ENCODE measurements at regions of chr2 and their contacts with region 1.

Region 1: DNA sequence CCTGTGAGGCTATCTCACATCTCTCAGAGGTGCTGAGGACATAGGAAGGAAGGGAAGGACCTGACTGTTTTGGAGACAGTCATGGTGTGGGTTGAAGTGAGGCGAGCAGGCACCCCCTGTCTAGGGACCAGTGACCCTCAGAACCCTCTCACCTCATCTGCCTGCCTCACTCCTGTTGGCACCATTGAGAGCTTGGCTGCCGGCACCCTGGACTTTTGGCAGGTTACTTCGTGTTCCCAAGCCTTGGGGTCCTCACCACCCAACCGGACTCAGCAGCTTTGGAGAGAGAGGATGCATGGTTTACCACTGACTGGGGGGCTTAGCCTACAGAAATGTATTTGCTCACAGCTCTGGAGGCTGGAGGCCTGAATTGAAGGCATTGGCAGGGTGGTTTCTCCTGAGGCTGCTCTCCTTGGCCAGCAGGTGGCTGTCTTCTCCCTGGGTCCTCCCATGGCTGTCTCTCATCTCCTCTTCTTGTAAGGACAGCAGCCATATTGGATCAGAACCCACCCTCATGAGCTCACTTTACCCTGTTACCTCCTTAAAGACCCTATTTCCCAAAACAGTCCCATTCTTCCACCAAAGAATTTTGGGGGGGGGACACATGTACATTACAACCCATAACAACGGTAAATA is 142.0 kb downstream of the TSN start:
- DNase-seq: peak; percentile 53 to 60
- H3K4me3 ChIP-seq: no peak overlapping the region
- H3K4me3 Mint-ChIP-seq: no peak overlapping the region
- H3K27ac Mint-ChIP-seq: no peak overlapping the region
- H3K4me1 ChIP-seq: no peaks in the 10 kb centered on the region
- H3K4me1 Mint-ChIP-seq: no peaks in the 10 kb centered on the region
- H3K27me3 ChIP-seq: no peaks in the 10 kb centered on the region
- H3K27me3 Mint-ChIP-seq: no peaks in the 10 kb centered on the region
- CTCF ChIP-seq: peak; percentile 39 to 61

Region 2: GRCh38 chr2:121810959-121811853 is 86.2 kb before region 1 on chr2:
- CTCF ChIA-PET with region 1: interaction called, 6 read pairs
- POLR2A ChIA-PET with region 1: no interaction called
- intact Hi-C with region 1: loop called (anchors 5 kb)
- DNase-seq: peak; percentile 66 to 70
- H3K4me3 ChIP-seq: no peak overlapping the region
- H3K4me3 Mint-ChIP-seq: no peak overlapping the region
- H3K27ac Mint-ChIP-seq: no peak overlapping the region
- H3K4me1 ChIP-seq: no peaks in the 10 kb centered on the region
- H3K4me1 Mint-ChIP-seq: peaks cover 9% of the 10 kb centered on the region
- H3K27me3 ChIP-seq: no peaks in the 10 kb centered on the region
- H3K27me3 Mint-ChIP-seq: no peaks in the 10 kb centered on the region
- CTCF ChIP-seq: peak; percentile 60 to 65

Region 3: DNA sequence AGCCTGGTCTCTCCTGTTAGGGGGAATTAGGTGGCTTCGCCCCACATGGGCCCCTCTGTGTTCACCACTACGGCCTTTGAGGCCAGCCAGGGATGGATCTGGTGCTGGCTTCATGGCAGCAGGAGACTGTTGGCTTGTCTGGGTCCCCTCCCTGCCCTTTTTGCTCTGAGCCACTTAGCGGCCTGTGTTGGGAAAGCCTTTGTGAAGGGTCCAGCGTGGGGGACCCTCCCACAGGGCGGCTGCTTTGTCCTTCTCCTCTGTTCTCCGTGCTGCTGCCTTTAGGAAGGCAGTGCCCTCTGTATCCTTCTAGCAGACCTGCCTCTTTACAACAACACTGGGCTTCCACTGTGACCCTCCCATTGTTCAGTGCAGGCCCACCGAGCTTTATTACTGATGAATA is 23.6 kb before region 1 on chr2:
- CTCF ChIA-PET with region 1: no interaction called
- POLR2A ChIA-PET with region 1: no interaction called
- intact Hi-C with region 1: no loop called
- DNase-seq: no peak
- H3K4me3 ChIP-seq: no peak overlapping the region
- H3K4me3 Mint-ChIP-seq: no peak overlapping the region
- H3K27ac Mint-ChIP-seq: no peak overlapping the region
- H3K4me1 ChIP-seq: no peaks in the 10 kb centered on the region
- H3K4me1 Mint-ChIP-seq: no peaks in the 10 kb centered on the region
- H3K27me3 ChIP-seq: peaks cover 2% of the 10 kb centered on the region
- H3K27me3 Mint-ChIP-seq: peaks cover 9% of the 10 kb centered on the region
- CTCF ChIP-seq: no peak